T-cell (primary cell): ENCODE measurements at regions of chr16 and their contacts with region 1.

Region 1: GRCh38 chr16:50166511-50167500 is 13.7 kb downstream of the TENT4B start:
- DNase-seq: no peak
- ATAC-seq: peak in 1 of 4 experiments; percentile 29
- H3K4me3 ChIP-seq: no peak overlapping the region
- H3K4me3 Mint-ChIP-seq: peak overlapping the region; percentile 11 to 58 (median 24)
- H3K27ac ChIP-seq: no peak overlapping the region
- H3K27ac Mint-ChIP-seq: peak overlapping the region; percentile 24 to 63
- H3K4me1 ChIP-seq: peaks cover 22 to 26% of the 10 kb centered on the region in 2 experiments
- H3K4me1 Mint-ChIP-seq: peaks cover 57 to 67% (median 57%) of the 10 kb centered on the region in 3 donors
- H3K27me3 ChIP-seq: no peaks in the 10 kb centered on the region
- H3K27me3 Mint-ChIP-seq: no peaks in the 10 kb centered on the region

Region 2: DNA sequence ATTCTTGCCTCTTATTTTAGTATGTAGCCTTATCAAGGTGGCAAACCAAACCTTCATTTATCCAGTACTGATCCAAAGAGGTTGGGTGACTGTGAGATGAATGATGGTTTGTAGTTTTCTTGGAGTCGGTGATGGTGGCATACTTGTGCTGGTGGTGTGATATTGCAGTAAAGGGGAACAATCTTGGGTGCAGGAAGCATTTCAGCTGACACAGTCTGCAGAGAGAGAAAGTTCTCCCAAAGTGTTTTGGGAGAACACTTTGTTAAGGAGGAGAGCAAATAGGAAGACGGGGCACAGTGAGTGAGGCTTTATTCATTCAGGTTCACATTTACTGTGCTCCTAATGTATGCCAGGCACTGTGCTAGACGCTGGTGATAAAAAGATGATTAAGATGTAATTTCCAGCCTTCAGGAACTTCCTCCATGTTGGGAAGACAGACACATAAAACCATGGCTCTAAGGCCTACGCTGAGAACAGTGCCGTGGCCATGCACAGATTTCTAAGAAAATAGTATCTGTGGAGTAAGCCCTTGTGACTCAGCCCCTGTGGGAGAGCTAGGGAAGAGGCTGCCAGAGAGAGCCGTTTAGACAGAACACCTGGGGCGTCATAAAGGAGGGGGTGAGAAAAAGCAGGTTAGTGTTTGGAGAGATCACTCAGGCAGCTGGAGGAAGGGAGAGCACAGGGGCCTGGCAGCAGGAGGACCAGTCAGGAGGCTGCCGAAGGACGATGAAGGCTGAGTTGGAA is 87.2 kb before region 1 on chr16:
- CTCF ChIA-PET with region 1: no interaction called
- POLR2A ChIA-PET with region 1: interaction called in 1 of 2 experiments, 12 read pairs
- DNase-seq: no peak
- ATAC-seq: no peak
- H3K4me3 ChIP-seq: no peak overlapping the region
- H3K4me3 Mint-ChIP-seq: no peak overlapping the region
- H3K27ac ChIP-seq: no peak overlapping the region
- H3K27ac Mint-ChIP-seq: no peak overlapping the region
- H3K4me1 ChIP-seq: no peaks in the 10 kb centered on the region
- H3K4me1 Mint-ChIP-seq: peaks cover 2 to 12% (median 9%) of the 10 kb centered on the region in 3 donors
- H3K27me3 ChIP-seq: no peaks in the 10 kb centered on the region
- H3K27me3 Mint-ChIP-seq: no peaks in the 10 kb centered on the region